ENCODE measurements at regions of chr5 and their contacts with region 1.

Region 1: GRCh38 chr5:61162010-61162831 is at the start of gene SMIM15:
- DNase-seq: peak; percentile 76
- ATAC-seq: peak; percentile 92
- H3K4me3 Mint-ChIP-seq: peak within 1 kb of the TSS; percentile 95
- H3K27ac Mint-ChIP-seq: peak within 1 kb of the TSS; percentile 95
- H3K4me1 Mint-ChIP-seq: peaks cover 30% of the 10 kb centered on the region
- H3K27me3 Mint-ChIP-seq: no peaks in the 10 kb centered on the region
- CTCF ChIP-seq: no peak
- total RNA-seq, gene SMIM15: 35.7 and 36.4 TPM in 2 replicates

Region 2: GRCh38 chr5:60944904-60945812 is 217.1 kb before region 1 on chr5 and contains the starts of genes ERCC8 and NDUFAF2:
- CTCF ChIA-PET with region 1: no interaction called
- POLR2A ChIA-PET with region 1: no interaction called
- intact Hi-C with region 1: loop called (anchors 2 kb)
- DNase-seq: peak; percentile 75
- ATAC-seq: peak; percentile 98
- H3K4me3 Mint-ChIP-seq: no peak within 1 kb of the TSS
- H3K27ac Mint-ChIP-seq: no peak within 1 kb of the TSS
- H3K4me1 Mint-ChIP-seq: peaks cover 28% of the 10 kb centered on the region
- H3K27me3 Mint-ChIP-seq: no peaks in the 10 kb centered on the region
- CTCF ChIP-seq: no peak
- total RNA-seq, gene ERCC8: 10.7 and 11.2 TPM in 2 replicates
- total RNA-seq, gene NDUFAF2: 13.1 and 20.0 TPM in 2 replicates

Region 3: DNA sequence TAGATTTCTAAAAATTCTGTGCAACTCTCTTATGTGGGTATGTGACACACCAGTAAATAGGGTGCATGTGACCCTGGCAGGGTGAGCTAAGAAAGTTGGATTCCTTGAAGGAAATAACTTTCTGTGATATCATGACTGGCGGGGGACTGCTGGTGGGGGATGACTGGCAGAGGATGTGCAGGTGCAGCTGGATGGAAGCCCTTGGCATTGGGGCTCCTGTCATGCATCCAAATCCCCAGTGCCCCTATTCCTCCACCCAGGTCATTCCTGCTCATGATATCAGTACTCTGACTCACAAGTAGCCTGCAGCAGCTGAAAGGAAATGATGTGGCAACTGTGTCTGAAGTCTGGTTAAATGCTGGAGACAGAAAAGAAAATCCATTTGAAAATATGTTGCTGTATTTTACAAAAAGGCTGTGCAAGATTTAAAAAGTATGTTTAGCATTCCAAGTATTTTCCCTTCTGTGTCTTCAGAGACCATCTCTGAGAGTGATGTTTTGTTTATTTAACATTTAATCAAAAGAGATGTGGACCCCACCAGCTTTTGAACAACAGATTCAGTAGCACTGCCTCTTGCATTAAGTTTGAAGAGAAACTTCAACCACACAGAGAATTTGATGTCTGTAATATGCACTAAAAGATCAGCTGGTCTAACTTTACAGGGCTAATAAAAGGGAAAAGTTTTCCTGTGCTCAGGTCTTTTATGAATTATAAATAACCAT is 151.9 kb after region 1 on chr5:
- CTCF ChIA-PET with region 1: no interaction called
- POLR2A ChIA-PET with region 1: no interaction called
- intact Hi-C with region 1: no loop called
- DNase-seq: no peak
- ATAC-seq: no peak
- H3K4me3 Mint-ChIP-seq: no peak overlapping the region
- H3K27ac Mint-ChIP-seq: no peak overlapping the region
- H3K4me1 Mint-ChIP-seq: peaks cover 6% of the 10 kb centered on the region
- H3K27me3 Mint-ChIP-seq: peaks cover 20% of the 10 kb centered on the region
- CTCF ChIP-seq: no peak

Region 4: GRCh38 chr5:63070001-63070400 is 1907.8 kb after region 1 on chr5:
- CTCF ChIA-PET with region 1: no interaction called
- POLR2A ChIA-PET with region 1: no interaction called
- intact Hi-C with region 1: no loop called
- DNase-seq: no peak
- ATAC-seq: no peak
- H3K4me3 Mint-ChIP-seq: no peak overlapping the region
- H3K27ac Mint-ChIP-seq: no peak overlapping the region
- H3K4me1 Mint-ChIP-seq: no peaks in the 10 kb centered on the region
- H3K27me3 Mint-ChIP-seq: no peaks in the 10 kb centered on the region
- CTCF ChIP-seq: no peak

Measured in activated B cell treated with CpG ODN at 0.5 μM for 24 hours (primary cell).